IMR-90 (cell line): ENCODE measurements at regions of chr1 and their contacts with region 1.

Region 1: DNA sequence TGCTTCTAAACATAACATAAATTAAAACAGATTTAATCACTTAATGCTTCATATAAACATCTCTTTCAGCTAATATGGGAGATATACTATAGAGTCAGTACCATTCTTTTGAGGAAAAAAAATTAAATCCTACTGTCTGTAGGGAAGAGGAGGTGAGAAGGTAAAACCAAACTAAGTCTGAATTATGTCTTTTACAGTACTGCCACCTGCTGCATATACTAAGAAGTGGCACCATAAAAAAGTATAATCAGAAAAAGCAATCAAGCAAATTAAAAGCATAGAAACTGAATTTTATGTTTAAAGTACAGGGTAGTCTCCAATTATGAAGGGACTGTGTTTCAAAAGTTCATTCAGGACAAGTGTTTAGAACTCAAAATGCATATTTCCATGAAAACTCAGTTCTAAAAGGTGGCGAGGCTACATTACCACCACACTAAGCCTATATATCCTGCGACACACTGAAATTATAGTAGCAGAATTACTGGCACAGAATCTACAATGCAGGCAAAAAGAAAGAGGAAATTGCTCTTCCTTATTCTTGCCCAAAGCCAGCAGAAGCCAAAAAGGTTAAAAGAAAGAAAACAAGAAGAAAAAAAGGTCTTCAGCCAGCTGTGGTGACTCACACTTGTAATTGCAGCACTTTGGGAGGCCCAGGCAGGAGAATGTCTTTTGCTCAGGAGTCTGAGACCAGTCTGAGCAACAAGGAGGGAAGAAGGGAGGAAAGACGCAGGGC is 9.0 kb downstream of the NSL1 start:
- DNase-seq: peak; percentile 69
- ATAC-seq: peak; percentile 81
- H3K4me3 ChIP-seq: no peak overlapping the region
- H3K27ac ChIP-seq: no peak overlapping the region
- H3K4me1 ChIP-seq: 0 out of 2 replicates have a peak, but pooled peaks cover 2% of the 10 kb centered on the region
- H3K27me3 ChIP-seq: no peaks in the 10 kb centered on the region
- CTCF ChIP-seq: peak; percentile 72
- POLR2A ChIP-seq: no peak
- RAD21 ChIP-seq: peak; percentile 77

Region 2: DNA sequence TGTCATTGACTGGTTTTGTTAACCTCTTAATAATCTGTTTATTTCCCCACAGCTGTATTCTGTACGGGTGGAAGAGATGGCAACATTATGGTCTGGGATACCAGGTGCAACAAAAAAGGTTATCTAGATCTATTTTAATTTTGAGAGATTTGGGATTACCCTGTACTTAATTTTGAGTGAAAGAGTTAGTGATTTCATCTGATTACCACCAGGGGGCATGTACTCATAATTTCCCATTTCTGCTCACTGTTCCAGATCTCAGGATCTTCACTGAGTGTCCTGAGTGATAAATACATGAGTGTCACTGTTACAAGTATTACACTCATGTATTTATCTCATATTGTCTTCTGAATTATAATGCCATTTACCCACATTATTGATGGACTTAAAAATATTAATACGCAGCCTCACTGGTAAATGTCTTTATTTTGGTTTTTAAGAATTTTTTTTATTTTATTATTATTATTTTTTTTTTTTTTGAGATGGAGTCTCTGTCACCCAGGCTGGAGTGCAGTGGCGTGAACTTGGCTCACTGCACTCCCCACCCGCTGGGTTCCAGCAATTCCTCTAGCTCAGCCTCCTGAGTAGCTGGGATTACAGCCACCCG is 719.7 kb before region 1 on chr1:
- CTCF ChIA-PET with region 1: no interaction called
- POLR2A ChIA-PET with region 1: no interaction called
- dilution Hi-C with region 1: no loop called
- in situ Hi-C with region 1: no loop called
- intact Hi-C with region 1: loop called (anchors 10 kb)
- DNase-seq: peak; percentile 57
- ATAC-seq: peak; percentile 80
- H3K4me3 ChIP-seq: no peak overlapping the region
- H3K27ac ChIP-seq: no peak overlapping the region
- H3K4me1 ChIP-seq: no peaks in the 10 kb centered on the region
- H3K27me3 ChIP-seq: no peaks in the 10 kb centered on the region
- CTCF ChIP-seq: peak; percentile 69
- POLR2A ChIP-seq: no peak
- RAD21 ChIP-seq: peak; percentile 62

Region 3: GRCh38 chr1:212847549-212847948 is 65.0 kb after region 1 on chr1 and contains the start of gene SPATA45:
- CTCF ChIA-PET with region 1: no interaction called
- POLR2A ChIA-PET with region 1: no interaction called
- dilution Hi-C with region 1: no loop called
- in situ Hi-C with region 1: no loop called
- intact Hi-C with region 1: no loop called
- DNase-seq: no peak
- ATAC-seq: no peak
- H3K4me3 ChIP-seq: no peak within 1 kb of the TSS
- H3K27ac ChIP-seq: no peak within 1 kb of the TSS
- H3K4me1 ChIP-seq: no peaks in the 10 kb centered on the region
- H3K27me3 ChIP-seq: no peaks in the 10 kb centered on the region
- CTCF ChIP-seq: no peak
- POLR2A ChIP-seq: no peak
- RAD21 ChIP-seq: no peak
- total RNA-seq, gene SPATA45: not detected in 2 replicates